Activated CD4-positive, alpha-beta T cell treated with anti-CD3 and anti-CD28 coated beads, Interleukin-2, amount 10 ng/mL, durations not matched to agents 24 days and 14 days (primary cell): ENCODE measurements at regions of chr3 and their contacts with region 1.

Region 1: DNA sequence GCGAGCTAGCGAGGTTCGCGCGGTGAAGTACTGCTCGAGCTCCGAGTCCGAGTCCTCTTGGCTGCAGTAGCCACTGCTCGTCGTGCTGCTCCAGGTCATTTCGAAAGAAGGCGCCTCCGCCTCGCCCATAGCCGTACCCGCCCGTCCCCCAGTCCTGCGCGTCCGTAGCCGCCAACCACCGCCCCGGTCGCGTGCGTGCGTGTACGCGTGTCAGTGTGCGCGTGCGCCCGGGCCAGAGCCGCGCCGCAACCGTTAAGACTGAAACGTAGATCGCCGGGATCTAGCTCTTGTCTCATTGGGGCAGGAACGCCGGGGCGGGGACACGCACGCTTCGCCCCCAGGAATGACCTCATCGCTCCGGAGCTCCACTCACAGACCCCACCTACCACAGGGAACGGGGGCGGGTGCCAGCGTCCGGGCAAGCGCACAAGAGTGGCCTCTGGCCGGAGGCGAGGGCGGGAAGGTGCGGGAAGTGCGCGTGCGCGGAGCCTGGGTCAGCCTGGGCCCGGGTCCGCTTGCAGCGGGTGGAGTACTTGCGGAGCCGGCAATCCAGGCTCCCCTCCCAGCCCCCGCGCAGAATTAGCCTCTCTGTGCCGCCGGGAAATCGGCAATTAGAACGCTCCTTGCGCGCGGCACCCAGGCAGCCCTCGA is 3.3 kb downstream of the RASSF1 start:
- DNase-seq: peak; percentile 99
- H3K4me3 Mint-ChIP-seq: peak overlapping the region; percentile 85
- H3K27ac Mint-ChIP-seq: peak overlapping the region; percentile 99
- H3K4me1 Mint-ChIP-seq: peaks cover 54% of the 10 kb centered on the region
- H3K27me3 Mint-ChIP-seq: no peaks in the 10 kb centered on the region

Region 2: DNA sequence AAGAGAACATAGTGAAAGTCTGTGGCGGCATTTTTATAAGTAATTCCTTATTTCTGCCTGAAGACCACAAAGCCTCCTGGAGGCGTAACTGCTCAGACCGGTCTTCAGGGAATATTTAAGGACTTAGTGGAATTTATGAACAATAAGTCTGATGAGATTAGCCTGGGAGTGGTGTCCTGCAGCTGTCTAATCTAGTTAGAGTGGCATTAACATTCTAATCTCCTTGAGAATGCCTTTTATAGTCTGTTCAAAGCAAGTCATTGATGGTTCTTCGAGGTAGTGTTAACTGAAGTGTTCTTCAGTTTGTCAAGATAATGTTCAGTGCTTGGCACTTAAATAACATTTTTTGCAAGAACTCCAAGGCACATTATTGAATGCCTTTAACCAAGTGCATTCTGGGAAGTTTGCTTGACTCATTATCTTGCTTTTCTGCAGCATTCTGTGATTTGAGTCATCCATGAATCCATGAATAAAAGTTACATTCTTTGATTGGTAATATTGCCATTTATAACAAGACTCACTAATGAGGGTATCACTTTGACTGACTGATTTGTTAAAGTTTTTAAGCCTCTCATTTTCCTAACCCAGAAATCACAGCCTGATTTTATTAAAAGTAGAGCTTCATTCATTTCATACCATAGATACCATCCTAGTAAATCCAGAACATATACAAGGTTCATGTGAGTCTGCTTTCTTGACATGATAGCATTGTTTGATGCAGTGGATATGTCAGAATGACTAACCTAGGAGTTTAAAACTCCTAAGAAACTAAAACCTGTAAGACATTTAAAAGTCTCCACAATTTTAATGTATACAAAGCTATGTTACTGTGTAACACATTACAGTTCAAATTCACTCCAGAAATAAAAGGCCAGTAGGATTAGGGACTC is 236.1 kb before region 1 on chr3:
- intact Hi-C with region 1: no loop called
- DNase-seq: no peak
- H3K4me3 Mint-ChIP-seq: no peak overlapping the region
- H3K27ac Mint-ChIP-seq: peak overlapping the region; percentile 49
- H3K4me1 Mint-ChIP-seq: peaks cover 7% of the 10 kb centered on the region
- H3K27me3 Mint-ChIP-seq: no peaks in the 10 kb centered on the region

Region 3: DNA sequence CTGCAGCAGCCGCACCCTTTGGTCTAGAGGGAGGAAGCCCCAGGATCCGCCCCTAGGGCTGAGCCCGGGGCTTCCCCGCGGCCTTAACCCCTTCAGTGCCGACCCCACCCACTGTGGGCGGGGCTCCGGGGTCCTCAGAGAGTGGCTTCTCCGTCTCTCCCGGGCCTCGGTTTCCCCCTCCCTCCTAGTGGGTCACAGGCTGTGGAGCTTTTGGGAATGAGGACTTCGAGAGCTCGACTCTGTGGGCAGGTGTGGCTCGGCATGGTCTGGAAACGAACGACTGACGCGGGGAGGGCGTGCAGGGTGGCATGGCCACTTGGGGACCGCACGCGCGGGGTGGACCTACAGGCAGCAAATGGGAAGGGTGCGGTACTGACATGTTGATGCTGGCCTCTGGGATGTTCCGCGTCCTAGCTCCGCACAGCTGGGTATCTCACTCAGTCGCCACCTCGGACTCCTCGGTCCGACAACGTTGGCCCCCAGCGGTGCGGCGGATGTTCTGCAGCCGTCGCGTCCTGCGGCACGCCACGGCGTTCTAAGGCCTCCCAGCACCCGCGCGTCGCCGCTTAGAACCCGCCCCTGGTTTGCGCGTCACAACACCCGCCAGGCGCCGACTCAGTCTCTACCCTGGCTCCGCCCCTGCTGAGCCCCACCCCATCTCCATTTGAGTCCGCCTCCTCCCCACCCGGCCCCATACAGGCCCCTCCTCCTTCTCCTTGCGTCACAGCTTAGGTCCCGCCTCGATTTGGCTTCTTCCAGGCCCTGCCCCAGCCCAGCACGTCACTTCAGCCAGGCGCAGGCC is 38.3 kb before region 1 on chr3 and contains the starts of genes HYAL3 and NAA80:
- intact Hi-C with region 1: loop called (anchors 1 kb)
- DNase-seq: peak; percentile 100
- H3K4me3 Mint-ChIP-seq: peak within 1 kb of the TSS; percentile 99
- H3K27ac Mint-ChIP-seq: peak within 1 kb of the TSS; percentile 98
- H3K4me1 Mint-ChIP-seq: peaks cover 22% of the 10 kb centered on the region
- H3K27me3 Mint-ChIP-seq: no peaks in the 10 kb centered on the region
- total RNA-seq, gene HYAL3: 7.1 and 7.3 TPM in 2 replicates
- total RNA-seq, gene NAA80: 17.3 and 20.0 TPM in 2 replicates

Region 4: DNA sequence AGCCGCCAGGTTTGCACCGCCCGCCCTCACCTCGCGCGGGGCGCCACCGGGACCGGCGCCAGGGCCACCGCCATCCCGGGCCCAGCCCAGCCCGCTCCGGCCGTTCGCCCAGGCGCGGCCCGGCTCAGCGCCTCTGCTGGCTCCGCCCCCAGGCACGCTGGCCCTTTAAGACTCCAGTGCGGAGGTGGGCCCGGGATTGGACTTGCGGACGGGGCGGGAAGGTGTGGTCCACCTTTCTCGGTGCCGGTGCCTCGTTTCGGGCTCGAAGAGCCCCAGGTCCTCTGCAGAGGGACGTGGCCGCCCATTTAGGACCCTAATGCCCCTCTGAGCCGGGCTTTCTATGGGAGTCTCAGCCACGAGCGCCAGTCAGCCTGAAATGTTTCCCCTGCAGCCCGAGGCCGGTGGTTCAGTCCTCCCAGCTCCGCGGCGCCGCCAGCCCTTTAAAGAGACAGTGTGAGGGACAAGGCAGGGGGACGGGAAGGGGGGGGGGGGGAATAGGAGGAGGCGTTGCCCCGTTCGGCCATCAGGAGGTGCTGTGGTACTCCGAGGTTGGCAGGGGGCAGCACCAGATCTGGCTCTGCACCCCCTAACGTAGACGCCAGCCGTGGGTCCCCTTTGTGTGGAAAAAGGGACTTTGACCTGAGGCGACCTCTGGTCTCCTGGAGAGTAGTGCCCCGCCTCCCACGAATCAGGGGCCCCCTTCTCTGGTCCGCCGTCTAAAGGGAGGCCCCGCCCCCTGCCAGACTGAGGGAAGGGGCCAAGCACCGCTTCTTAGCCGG is 15.8 kb before region 1 on chr3:
- intact Hi-C with region 1: loop called (anchors 1 kb)
- DNase-seq: peak; percentile 96
- H3K4me3 Mint-ChIP-seq: peak overlapping the region; percentile 88
- H3K27ac Mint-ChIP-seq: peak overlapping the region; percentile 92
- H3K4me1 Mint-ChIP-seq: peaks cover 27% of the 10 kb centered on the region
- H3K27me3 Mint-ChIP-seq: no peaks in the 10 kb centered on the region

Region 5: DNA sequence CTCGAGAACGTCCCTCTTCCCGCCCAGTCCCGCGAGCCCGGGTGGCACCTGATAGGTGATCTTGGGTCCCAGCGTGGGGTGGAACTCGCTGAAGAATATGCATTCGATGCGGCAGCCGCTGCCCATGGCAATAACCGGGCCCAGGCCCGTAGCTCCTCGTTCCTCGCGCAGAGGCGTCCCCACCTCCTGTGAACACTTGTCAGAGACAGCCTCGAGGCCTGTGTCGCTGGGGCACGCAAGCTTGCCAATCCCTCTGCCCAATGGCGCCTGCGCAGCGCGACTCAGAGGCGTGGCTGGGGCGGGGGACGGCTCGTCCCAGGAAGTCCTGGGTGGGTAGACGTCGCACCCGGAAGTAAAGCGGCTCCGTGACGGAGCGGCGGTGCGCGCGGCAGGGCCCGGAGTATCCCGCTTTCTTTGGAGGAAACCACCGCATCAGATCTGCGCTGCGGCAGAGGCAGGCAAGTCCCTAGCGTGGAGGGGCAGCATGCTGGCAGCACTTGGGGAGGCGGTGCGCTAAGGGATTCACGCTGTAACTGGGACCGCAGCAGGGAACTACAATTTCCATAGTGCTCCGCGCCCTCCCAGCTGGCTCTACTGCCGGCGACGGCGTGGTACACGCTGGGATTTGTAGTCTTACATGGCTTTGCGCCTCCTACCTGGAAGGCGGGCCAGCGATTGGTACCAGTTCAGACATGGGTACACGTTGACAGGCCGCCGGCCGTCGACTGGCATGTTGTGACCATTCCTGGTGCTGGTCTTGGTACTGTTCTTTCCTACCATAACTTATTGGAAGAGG is 13.4 kb after region 1 on chr3 and contains the starts of genes CYB561D2 and NPRL2:
- intact Hi-C with region 1: loop called (anchors 1 kb)
- DNase-seq: peak; percentile 100
- H3K4me3 Mint-ChIP-seq: peak within 1 kb of the TSS; percentile 95
- H3K27ac Mint-ChIP-seq: peak within 1 kb of the TSS; percentile 97
- H3K4me1 Mint-ChIP-seq: peaks cover 40% of the 10 kb centered on the region
- H3K27me3 Mint-ChIP-seq: no peaks in the 10 kb centered on the region
- total RNA-seq, gene CYB561D2: 23.9 and 27.0 TPM in 2 replicates
- total RNA-seq, gene NPRL2: 38.1 and 43.0 TPM in 2 replicates

Region 6: DNA sequence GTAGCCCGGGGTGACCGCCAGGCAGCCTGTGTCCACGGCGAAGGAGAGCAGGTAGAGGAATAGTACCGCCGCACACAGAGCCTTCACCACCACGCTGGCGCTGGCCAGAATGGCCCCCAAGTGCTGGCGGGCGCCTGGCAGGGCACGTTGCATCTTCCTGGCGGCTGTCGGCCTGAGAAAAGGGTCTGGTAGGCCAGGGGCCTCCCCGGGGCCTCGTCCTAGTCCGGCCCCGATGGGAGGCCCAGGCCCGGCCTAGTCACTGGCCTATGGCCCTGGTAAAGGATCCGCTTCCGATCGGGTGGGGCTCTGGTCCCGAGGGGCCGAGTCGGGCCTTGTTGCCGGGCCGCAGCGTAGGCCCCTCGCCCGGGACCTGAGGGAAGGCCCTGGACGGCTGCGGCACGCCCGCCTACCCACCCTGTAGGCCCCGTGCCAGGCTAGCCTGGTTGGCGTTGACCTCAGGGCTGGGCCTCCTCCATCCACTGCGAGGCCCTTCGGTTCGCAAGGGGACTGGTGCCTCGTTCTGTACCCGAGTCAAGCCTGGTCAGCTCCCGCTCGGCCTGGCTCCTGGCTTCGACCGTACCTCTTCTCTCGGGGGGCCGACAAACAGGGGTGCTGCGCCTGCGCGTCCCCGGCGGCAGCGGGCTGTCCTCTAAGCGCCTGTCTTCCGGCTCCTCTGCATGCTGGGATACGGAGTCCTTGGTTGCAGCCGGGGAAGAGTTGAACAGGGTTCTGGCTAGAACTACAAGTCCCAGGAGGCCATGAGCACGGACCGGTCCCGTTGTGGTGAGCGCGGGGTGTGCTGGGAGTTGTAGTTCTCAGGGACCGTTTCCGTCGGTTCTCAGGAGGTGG is 21.8 kb after region 1 on chr3 and contains the start of gene TMEM115:
- intact Hi-C with region 1: loop called (anchors 2 kb)
- DNase-seq: peak; percentile 98
- H3K4me3 Mint-ChIP-seq: peak within 1 kb of the TSS; percentile 98
- H3K27ac Mint-ChIP-seq: peak within 1 kb of the TSS; percentile 95
- H3K4me1 Mint-ChIP-seq: peaks cover 35% of the 10 kb centered on the region
- H3K27me3 Mint-ChIP-seq: no peaks in the 10 kb centered on the region
- total RNA-seq, gene TMEM115: 20.3 and 20.5 TPM in 2 replicates

Region 7: DNA sequence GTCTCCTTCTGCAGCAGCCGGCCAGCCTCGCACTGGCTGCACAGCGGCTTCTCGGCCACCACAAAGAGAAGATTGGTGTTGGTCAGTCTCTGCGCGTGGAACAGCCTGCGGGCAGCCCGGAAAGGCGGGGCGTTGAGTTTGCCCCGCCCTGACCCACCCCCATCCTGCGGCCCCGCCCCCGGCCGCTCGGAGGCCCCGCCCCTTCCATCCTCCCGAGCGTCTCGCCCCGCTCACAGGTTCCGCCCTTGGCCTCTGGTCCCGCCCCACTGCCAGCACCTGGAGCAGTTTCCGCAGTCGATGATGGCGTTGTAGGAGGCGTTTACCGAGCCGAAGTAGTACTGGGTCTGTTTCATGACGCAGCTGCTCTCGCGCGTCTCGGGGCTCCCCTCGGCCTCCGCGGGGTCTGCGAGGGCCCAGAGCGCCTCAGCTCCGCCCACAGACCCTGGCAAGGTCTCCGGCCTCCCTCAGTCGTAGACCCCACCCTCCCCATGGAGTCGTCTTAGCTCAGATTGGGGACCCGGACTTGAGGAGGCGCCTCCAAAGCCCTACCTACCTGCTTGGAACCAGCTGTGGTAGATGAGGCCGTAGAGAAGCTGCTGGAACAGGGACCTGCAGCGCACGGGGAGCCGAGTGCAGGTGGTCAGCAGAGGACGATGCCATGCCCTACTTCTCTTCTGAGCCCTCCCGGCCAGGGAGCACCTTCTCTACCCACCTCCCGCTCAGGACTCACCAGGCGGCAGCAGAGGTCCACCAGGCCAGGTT is 27.9 kb after region 1 on chr3:
- intact Hi-C with region 1: loop called (anchors 1 kb)
- DNase-seq: peak; percentile 98
- H3K4me3 Mint-ChIP-seq: peak overlapping the region; percentile 83
- H3K27ac Mint-ChIP-seq: peak overlapping the region; percentile 62
- H3K4me1 Mint-ChIP-seq: peaks cover 11% of the 10 kb centered on the region
- H3K27me3 Mint-ChIP-seq: no peaks in the 10 kb centered on the region

Region 8: GRCh38 chr3:50436114-50436674 is 98.9 kb after region 1 on chr3:
- intact Hi-C with region 1: no loop called
- DNase-seq: peak; percentile 94
- H3K4me3 Mint-ChIP-seq: no peak overlapping the region
- H3K27ac Mint-ChIP-seq: no peak overlapping the region
- H3K4me1 Mint-ChIP-seq: peaks cover 4% of the 10 kb centered on the region
- H3K27me3 Mint-ChIP-seq: peaks cover 2% of the 10 kb centered on the region